ENCODE measurements at regions of chr1 and their contacts with region 1.

Region 1: DNA sequence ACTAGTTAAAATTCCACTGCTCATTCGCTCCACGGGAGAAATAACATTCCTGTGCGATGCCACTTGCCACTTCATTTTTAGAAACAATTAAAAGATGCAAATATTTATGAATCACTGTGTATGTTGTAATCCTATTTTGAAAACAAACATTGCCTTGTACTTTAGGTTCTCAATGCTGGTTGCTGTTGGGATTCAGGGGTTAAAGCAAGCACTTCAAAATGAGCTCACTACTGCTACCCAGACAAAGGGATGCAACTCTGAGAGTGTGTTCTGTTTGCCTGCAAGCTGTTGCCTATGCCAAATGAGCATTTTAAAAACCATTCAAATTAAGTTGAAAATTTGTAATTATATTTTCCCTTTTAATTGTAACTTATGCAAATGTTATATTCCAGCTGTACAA is 87.5 kb downstream of the RWDD3 start:
- DNase-seq: no peak

Region 2: DNA sequence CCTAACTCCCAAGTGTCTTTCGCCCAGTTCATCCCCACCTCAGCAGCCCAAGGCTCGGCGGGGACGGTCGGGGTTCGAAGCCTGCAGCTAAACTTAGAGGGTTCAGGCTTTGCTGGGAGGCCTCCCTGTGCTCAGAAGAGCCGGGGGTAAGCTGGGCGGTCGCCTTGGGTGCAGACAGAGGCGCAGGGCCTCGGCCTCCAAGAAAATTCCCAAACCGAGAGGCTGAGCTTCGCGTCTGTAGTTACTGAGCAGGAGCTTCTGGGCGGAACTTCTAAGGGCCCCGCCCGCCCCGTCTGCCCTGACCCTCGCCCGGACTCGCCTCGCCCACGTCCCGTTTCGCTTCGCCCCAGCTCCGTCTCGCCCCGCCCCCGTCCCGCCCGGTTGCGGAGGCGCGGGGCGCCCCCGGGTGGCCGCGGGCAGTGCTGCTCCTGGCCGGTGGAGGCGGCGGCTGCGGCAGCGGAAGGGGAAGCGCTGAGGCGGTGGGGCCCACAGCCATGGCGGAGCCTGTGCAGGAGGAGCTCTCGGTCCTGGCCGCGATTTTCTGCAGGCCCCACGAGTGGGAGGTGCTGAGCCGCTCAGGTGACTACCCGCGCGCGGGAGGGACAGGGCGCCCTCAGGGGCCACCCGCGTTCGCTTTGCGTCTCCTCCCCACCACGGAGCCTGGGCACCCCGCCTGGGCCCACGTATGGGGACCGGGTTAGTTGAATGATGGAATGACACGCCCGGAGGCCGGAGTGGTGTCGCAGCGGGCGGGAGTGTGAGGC is 87.6 kb before region 1 on chr1 and contains the start of gene RWDD3:
- intact Hi-C with region 1: no loop called
- DNase-seq: peak; percentile 98
- total RNA-seq, gene RWDD3: 17.1 to 17.4 TPM

Region 3: DNA sequence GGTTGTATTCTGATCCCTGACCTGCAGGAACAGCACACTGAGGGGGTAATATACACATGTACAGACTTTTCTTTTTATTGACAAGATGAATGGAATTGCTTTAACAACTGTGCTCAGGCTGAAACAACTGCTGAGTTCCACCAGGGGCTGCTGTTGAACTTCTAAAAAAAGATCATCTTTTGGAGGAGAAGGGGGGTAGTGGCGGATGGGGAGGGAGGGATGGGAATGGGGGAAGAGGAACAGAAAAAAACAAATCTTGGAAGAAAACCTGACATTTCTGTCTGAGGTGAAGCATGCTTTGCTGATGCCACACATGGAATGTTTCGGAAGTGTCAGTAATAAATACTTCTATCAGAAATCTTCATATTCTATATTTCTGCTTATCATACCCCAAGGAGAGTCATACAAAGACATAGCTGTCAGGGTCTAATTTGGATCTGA is 12.5 kb before region 1 on chr1:
- intact Hi-C with region 1: loop called in 1 of 2 experiments (anchors 1 kb)
- DNase-seq: no peak

Region 4: DNA sequence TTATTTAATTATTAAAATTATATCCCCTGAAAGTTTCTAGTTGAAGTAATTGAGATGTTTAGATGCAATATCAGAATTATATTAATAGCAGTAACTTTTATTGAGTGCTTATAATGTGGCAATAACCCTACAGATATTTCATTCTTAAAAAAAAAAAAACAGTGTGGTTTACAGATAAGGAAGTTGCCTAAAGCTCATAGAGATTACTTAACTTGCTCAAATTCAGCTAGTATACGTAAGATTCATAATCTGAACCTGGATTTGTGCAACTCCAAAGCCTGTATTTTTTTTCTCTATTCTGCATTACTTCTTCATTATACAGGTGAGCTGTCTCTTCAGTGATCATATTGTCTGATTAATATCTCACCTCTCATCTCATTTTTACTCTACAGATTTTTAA is 1244.0 kb after region 1 on chr1:
- intact Hi-C with region 1: no loop called
- DNase-seq: no peak